ENCODE measurements at regions of chr19 and their contacts with region 1.

Region 1: GRCh38 chr19:38647368-38647965 is at the start of gene ACTN4:
- DNase-seq: peak in 1 of 2 donors; percentile 97
- H3K4me3 ChIP-seq: peak within 1 kb of the TSS; percentile 97 to 99
- H3K27ac ChIP-seq: peak within 1 kb of the TSS; percentile 97
- H3K4me1 ChIP-seq: peaks cover 42% of the 10 kb centered on the region
- H3K27me3 ChIP-seq: no peaks in the 10 kb centered on the region
- CTCF ChIP-seq: no peak
- POLR2A ChIP-seq: peak; percentile 65 to 99
- total RNA-seq, gene ACTN4: 513 TPM

Region 2: DNA sequence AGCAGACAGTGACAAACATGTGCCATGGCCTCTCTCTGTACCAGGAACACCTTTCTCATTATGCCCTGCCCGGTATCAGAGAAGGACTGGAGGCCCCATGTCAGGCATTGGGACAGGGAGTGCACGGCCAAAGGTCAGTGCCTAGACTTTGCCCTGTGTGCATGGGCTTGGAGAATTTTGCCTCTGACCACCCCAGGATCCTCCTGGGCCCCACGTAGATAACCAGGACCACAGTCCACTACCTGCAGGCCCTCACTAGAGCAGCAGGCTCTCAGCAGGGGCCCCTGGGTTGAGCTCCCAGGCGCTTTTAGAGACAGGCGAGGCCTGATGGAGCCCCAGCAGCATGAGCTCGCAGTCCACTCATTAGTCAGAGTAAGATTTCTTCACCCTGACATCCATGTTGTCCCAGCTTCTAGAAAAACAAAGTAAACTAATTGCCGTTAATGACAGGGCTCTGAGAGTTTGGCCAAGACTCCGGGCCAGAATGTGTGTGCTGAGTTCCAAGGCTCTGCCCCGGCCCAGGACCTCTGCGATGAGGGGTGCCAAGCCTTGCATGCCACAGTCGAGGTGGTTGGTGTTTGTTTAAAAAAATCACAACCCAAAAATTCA is 54.1 kb after region 1 on chr19:
- intact Hi-C with region 1: loop called (anchors 5 kb)
- DNase-seq: no peak
- H3K4me3 ChIP-seq: no peak overlapping the region
- H3K27ac ChIP-seq: peak overlapping the region; percentile 52
- H3K4me1 ChIP-seq: peaks cover 54% of the 10 kb centered on the region
- H3K27me3 ChIP-seq: no peaks in the 10 kb centered on the region
- CTCF ChIP-seq: no peak
- POLR2A ChIP-seq: no peak

Region 3: DNA sequence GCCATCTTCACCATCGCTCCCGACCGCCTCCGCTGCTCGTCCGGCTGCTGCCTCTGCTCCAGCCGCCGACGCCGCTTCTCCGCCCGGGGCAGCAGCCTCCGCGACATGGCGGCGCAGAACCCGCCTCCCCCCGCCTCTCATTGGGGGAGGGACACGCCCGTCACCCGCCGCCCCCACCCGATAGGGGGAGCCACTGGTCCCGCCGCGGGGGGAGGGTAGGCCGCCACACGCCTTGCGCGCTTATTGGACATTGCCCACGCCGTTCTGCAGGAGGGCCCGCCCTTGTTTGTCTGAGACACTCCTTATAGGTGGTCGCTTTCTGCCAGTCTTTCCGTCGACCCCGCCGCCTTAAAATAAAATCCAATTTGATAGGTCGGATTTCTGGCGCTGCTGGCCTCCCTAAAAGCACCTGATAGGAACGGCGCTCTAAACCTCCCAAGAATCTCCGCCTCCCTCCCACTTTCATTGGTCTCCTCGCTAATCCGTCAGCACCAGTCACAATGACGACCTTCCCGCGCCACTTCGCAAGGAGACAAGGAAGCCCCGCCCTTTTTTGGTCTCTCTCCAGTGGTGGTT is 202.5 kb after region 1 on chr19 and contains the start of gene HNRNPL:
- intact Hi-C with region 1: loop called (anchors 5 kb)
- DNase-seq: peak; percentile 100
- H3K4me3 ChIP-seq: peak within 1 kb of the TSS; percentile 93 to 99
- H3K27ac ChIP-seq: peak within 1 kb of the TSS; percentile 100
- H3K4me1 ChIP-seq: peaks cover 53% of the 10 kb centered on the region
- H3K27me3 ChIP-seq: no peaks in the 10 kb centered on the region
- CTCF ChIP-seq: peak in 2 of 3 experiments; percentile 36
- POLR2A ChIP-seq: peak in 1 of 2 donors; percentile 97
- total RNA-seq, gene HNRNPL: 190 TPM

Measured in vagina (tissue), 2 donors.